HCT116 (cell line): ENCODE measurements at regions of chr7 and their contacts with region 1.

Region 1: GRCh38 chr7:98907570-98907969 is 29.2 kb downstream of the TRRAP start:
- DNase-seq: no peak
- ATAC-seq: peak; percentile 44; the same call in 1 of the 2 replicates
- H3K4me3 ChIP-seq: no peak overlapping the region
- H3K27ac ChIP-seq: no peak overlapping the region
- H3K4me1 ChIP-seq: no peaks in the 10 kb centered on the region
- H3K27me3 ChIP-seq: no peaks in the 10 kb centered on the region
- CTCF ChIP-seq: no peak
- POLR2A ChIP-seq: no peak
- RAD21 ChIP-seq: no peak

Region 2: DNA sequence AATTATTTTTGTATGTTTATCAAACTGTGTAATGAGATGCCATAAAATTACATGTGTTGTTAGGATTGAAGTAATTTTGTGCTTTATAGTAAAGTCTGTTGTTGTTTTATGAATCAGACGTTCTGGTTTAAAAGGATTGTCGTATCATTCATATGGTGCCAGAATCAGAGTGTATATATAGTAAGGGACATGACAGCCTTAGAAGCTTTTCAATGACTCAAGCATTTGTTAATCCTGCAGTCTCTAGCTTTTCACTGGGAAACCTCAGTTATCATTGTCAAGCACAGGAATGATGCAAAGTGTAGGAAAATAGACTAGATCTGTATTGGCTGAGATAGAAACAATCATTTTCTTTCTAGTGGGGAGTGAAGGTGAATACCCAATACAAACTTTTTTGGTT is 28.2 kb after region 1 on chr7:
- CTCF ChIA-PET with region 1: no interaction called
- POLR2A ChIA-PET with region 1: no interaction called
- RAD21 ChIA-PET with region 1: no interaction called
- intact Hi-C with region 1: loop called (anchors 2 kb)
- DNase-seq: no peak
- ATAC-seq: no peak
- H3K4me3 ChIP-seq: no peak overlapping the region
- H3K27ac ChIP-seq: no peak overlapping the region
- H3K4me1 ChIP-seq: no peaks in the 10 kb centered on the region
- H3K27me3 ChIP-seq: no peaks in the 10 kb centered on the region
- CTCF ChIP-seq: no peak
- POLR2A ChIP-seq: no peak
- RAD21 ChIP-seq: no peak

Region 3: DNA sequence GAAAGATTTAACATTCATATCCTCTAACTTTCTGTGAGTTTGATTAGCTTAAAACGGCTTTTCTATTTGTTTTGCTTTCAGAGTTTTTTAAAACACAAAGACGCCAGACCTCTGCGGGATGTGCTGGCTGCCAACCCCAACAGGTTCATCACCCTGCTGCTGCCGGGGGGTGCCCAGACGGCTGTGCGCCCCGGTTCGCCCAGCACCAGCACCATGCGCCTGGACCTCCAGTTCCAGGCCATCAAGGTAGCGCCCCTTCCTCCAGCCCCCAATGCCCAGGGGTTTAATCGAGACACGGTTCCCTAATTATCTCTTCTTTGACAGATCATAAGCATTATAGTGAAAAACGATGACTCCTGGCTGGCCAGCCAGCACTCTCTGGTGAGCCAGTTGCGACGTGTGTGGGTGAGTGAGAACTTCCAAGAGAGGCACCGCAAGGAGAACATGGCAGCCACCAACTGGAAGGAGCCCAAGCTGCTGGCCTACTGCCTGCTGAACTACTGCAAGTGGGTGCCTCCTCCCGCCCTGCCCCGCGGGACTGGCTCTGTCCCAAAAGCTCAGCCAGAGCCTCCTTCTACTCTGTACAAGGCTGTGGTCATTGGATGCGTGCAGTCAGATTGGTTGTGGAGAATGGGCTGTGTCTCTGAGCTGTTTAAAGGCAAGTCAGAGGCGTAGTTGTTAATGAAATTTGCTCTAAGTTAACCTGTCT is 41.9 kb after region 1 on chr7:
- CTCF ChIA-PET with region 1: no interaction called
- POLR2A ChIA-PET with region 1: no interaction called
- RAD21 ChIA-PET with region 1: no interaction called
- intact Hi-C with region 1: no loop called
- DNase-seq: no peak
- ATAC-seq: no peak
- H3K4me3 ChIP-seq: no peak overlapping the region
- H3K27ac ChIP-seq: no peak overlapping the region
- H3K4me1 ChIP-seq: no peaks in the 10 kb centered on the region
- H3K27me3 ChIP-seq: no peaks in the 10 kb centered on the region
- CTCF ChIP-seq: no peak
- POLR2A ChIP-seq: no peak
- RAD21 ChIP-seq: no peak